ENCODE measurements at regions of chr4 and their contacts with region 1.

Region 1: DNA sequence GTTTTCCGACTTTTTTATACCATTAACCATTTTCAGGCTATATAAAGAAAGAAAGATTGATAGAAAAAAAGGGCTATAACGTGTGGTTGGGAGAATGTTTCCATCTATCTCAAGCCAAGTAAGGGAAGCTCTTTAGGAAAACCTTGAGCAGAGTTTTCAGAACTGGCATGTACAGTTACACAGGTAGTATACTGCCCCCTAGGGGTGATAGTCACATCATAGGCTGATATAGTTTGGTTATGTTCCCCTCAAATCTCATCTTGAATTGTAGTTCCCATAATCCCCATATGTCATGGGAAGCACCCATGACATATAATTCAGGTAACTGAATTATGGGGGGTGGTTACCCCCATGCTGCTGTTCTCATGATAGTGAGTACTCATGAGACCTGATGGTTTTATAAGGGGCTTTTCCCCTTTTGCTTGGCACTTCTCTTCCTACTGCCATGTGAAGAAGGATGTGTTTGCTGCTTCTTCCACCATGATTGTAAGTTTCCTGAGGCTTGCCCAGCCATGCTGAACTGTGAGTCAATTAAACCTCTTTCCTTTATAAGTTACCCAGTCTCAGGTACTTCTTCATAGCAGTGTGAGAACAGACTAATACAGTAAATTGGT is 186.8 kb downstream of the TMA16 start:
- DNase-seq: peak; percentile 11

Region 2: GRCh38 chr4:163284304-163284703 is 397.0 kb before region 1 on chr4:
- in situ Hi-C with region 1: no loop called
- DNase-seq: no peak

Region 3: GRCh38 chr4:163554870-163555465 is 126.3 kb before region 1 on chr4:
- in situ Hi-C with region 1: loop called (anchors 10 kb)
- DNase-seq: no peak

Region 4: GRCh38 chr4:163638909-163639308 is 42.4 kb before region 1 on chr4:
- in situ Hi-C with region 1: no loop called
- DNase-seq: no peak

Region 5: DNA sequence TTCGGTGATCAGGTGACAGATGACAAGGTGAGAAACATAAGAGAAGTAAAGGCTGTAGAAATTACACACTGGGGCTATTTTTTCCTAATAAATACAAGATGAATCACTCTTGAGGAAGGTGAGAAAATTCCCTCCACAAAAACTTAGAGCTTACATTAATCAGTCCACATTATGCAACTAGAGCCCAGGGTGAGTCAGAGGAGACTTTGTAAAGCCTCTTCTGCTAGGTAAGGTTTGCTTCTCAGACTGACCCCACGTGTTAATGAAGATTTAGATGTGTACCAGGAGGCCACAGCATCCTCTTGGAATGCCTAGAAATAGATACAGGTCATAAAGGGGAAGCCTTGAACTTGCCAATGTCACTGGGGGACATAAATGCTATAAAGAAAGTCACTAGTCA is 676.6 kb after region 1 on chr4:
- in situ Hi-C with region 1: no loop called
- DNase-seq: no peak